Right ventricle myocardium inferior (tissue), 1 donor: ENCODE measurements at regions of chr5 and their contacts with region 1.

Region 1: GRCh38 chr5:112196584-112196983 is 222.5 kb downstream of the EPB41L4A start:
- DNase-seq: no peak
- ATAC-seq: no peak

Region 2: GRCh38 chr5:112025757-112026156 is 170.8 kb before region 1 on chr5:
- intact Hi-C with region 1: no loop called
- DNase-seq: no peak
- ATAC-seq: no peak

Region 3: DNA sequence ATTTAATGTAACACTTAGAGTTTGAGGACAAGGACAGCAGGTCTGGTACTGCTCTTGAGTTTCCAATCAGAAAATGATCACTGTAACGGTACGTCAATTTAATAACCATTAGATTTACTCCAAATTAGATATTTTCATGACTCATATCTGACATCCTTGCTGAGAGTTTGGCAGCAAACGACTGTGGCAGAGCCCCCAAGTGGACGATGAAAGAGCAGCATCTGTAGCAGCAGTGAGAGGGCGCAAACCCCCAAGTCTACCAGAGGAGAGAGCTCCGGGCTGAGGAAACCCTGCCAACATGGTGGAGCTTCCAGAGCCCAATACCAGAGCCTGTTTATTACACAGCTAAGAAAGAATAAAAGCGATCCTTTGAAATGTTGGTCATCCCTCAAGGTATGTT is 295.7 kb after region 1 on chr5:
- intact Hi-C with region 1: loop called (anchors 10 kb)
- DNase-seq: peak; percentile 77
- ATAC-seq: peak; percentile 87

Region 4: GRCh38 chr5:112551419-112552032 is 354.9 kb after region 1 on chr5:
- intact Hi-C with region 1: no loop called
- DNase-seq: no peak
- ATAC-seq: no peak